GM10248 (cell line): ENCODE measurements at regions of chr5 and their contacts with region 1.

Region 1: GRCh38 chr5:134864707-134865106 is 9.5 kb upstream of the TXNDC15 start:
- DNase-seq: no peak
- CTCF ChIP-seq: no peak

Region 2: GRCh38 chr5:134851307-134851923 is 13.3 kb before region 1 on chr5:
- CTCF ChIA-PET with region 1: interaction called, 10 read pairs
- POLR2A ChIA-PET with region 1: interaction called, 5 read pairs
- DNase-seq: no peak
- CTCF ChIP-seq: peak; percentile 41